ENCODE measurements at regions of chr2 and their contacts with region 1.

Region 1: DNA sequence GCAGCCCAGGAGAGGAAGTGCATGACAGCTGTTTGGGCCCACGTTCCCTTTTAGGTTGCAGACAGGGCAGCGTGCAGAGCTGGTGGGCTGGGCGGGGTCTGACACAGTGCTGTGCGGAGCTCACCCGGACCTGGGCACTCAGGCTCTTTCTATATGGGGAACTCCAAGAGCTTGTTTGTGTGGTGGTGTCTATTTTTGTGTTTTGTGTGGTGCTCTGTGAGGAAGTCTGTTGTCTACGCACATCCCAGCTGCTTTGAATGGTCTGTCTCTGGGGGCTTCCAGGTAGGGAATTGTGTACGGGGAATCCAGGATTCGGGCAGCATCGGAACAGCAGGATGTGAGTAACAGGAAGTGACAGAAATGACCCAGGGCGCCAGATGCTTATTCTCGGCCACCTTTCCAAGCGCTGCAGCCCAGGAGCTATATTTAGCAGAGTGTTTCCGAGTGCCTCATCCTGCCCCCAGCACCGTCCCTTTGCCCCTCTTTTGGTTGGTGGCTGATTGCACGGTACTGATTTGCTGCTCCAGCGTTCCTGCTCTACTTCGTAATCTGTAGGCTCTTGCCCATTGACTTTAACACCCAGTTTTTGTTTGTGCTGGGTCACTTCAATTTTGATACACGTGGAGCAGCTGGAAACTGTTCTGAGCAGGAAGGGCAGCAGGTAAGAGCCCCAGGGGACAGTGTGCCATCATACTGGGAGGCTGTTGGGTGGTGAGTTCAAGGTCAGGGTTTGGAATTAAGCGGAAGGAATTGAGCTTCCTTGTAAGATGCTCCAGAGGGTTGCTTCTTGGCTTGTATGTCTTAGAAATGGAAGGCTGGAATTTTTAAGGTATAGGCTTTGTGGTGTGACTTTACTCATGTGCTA is 64.7 kb downstream of the DGKD start:
- DNase-seq: peak; percentile 72
- H3K4me3 Mint-ChIP-seq: peak overlapping the region; percentile 63
- H3K27ac Mint-ChIP-seq: peak overlapping the region; percentile 85
- H3K4me1 Mint-ChIP-seq: peaks cover 92% of the 10 kb centered on the region
- H3K27me3 Mint-ChIP-seq: no peaks in the 10 kb centered on the region

Region 2: DNA sequence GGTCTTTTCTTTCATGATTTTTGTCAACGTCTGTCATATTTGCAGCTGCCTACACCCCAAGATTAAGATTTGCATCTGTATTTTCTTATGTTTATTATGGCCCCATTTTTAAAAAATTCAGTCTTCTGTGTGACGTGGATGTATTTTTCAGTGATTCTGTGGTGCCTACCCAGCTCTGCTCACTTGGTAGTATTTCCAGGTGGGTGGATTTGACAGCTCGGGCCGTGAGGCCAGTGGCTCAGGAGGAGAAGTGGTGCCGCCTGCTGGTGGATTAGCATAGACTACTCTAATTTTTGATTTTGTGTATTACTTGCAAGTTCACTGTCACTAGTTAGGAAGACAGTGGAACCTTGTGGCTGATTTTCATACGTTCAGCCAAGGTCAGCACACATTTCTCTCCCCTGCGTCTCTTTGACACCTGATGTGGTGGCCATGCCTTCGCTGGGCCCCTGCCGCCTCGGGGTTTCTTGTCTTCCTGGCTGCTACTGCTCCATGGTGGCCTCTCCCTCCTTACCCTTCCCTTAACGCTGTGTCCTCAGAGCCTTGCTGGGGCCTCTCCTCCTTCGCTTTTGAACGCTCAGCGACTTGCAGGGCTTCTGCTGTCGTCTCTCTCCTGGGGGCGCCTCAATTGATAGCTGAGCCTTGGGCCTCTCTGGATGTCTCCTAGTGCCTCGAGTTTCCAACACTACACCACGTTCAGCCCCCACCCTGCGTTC is 24.6 kb after region 1 on chr2:
- CTCF ChIA-PET with region 1: interaction called, 84 read pairs
- POLR2A ChIA-PET with region 1: no interaction called
- intact Hi-C with region 1: no loop called
- DNase-seq: peak; percentile 88
- H3K4me3 Mint-ChIP-seq: no peak overlapping the region
- H3K27ac Mint-ChIP-seq: no peak overlapping the region
- H3K4me1 Mint-ChIP-seq: peaks cover 9% of the 10 kb centered on the region
- H3K27me3 Mint-ChIP-seq: no peaks in the 10 kb centered on the region

Measured in activated CD4-positive, alpha-beta memory T cell treated with anti-CD3 and anti-CD28 coated beads for 36 hours (primary cell).